Astrocyte of the cerebellum (primary cell): ENCODE measurements at regions of chr10 and their contacts with region 1.

Region 1: GRCh38 chr10:76729816-76730487 is 907.7 kb downstream of the KCNMA1 start:
- DNase-seq: no peak
- H3K4me3 ChIP-seq: no peak overlapping the region
- CTCF ChIP-seq: no peak

Region 2: GRCh38 chr10:76675951-76676587 is 53.9 kb before region 1 on chr10:
- in situ Hi-C with region 1: loop called (anchors 5 kb)
- DNase-seq: peak; percentile 86
- H3K4me3 ChIP-seq: no peak overlapping the region
- CTCF ChIP-seq: peak; percentile 18